Activated CD4-positive, alpha-beta T cell treated with anti-CD3 and anti-CD28 coated beads for 36 hours (primary cell): ENCODE measurements at regions of chr3 and their contacts with region 1.

Region 1: DNA sequence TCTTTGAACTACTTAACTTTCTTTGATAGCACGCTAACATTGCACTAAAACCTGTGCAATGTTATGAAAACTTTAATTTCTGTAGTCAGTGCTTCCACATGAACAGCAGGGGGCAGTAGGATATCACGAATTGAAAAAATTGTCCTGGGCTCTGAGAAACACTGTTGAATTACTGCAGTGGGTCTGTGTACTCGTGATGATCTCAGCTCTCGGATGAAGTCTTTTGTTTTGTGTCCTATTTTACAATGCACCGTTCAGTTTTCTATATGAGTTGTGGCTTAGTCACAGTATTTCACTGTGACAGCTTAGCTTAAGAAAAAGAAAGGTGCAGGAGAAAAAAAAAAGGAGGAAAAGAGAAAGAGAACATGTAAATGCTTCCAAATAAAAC is 141.3 kb upstream of the CCDC54 start:
- DNase-seq: peak; percentile 56
- ATAC-seq: peak; percentile 82
- H3K4me3 Mint-ChIP-seq: peak overlapping the region; percentile 28
- H3K27ac Mint-ChIP-seq: no peak overlapping the region
- H3K4me1 Mint-ChIP-seq: peaks cover 10% of the 10 kb centered on the region
- H3K27me3 Mint-ChIP-seq: peaks cover 6% of the 10 kb centered on the region

Region 2: GRCh38 chr3:107247110-107247509 is 11.2 kb after region 1 on chr3:
- CTCF ChIA-PET with region 1: interaction called, 14 read pairs
- POLR2A ChIA-PET with region 1: no interaction called
- intact Hi-C with region 1: no loop called
- DNase-seq: no peak
- ATAC-seq: no peak
- H3K4me3 Mint-ChIP-seq: no peak overlapping the region
- H3K27ac Mint-ChIP-seq: no peak overlapping the region
- H3K4me1 Mint-ChIP-seq: peaks cover 3% of the 10 kb centered on the region
- H3K27me3 Mint-ChIP-seq: no peaks in the 10 kb centered on the region

Region 3: GRCh38 chr3:107421170-107421792 is 185.4 kb after region 1 on chr3:
- CTCF ChIA-PET with region 1: interaction called, 44 read pairs
- POLR2A ChIA-PET with region 1: no interaction called
- intact Hi-C with region 1: loop called (anchors 1 kb)
- DNase-seq: no peak
- ATAC-seq: peak; percentile 79
- H3K4me3 Mint-ChIP-seq: no peak overlapping the region
- H3K27ac Mint-ChIP-seq: no peak overlapping the region
- H3K4me1 Mint-ChIP-seq: peaks cover 3% of the 10 kb centered on the region
- H3K27me3 Mint-ChIP-seq: peaks cover 7% of the 10 kb centered on the region

Region 4: DNA sequence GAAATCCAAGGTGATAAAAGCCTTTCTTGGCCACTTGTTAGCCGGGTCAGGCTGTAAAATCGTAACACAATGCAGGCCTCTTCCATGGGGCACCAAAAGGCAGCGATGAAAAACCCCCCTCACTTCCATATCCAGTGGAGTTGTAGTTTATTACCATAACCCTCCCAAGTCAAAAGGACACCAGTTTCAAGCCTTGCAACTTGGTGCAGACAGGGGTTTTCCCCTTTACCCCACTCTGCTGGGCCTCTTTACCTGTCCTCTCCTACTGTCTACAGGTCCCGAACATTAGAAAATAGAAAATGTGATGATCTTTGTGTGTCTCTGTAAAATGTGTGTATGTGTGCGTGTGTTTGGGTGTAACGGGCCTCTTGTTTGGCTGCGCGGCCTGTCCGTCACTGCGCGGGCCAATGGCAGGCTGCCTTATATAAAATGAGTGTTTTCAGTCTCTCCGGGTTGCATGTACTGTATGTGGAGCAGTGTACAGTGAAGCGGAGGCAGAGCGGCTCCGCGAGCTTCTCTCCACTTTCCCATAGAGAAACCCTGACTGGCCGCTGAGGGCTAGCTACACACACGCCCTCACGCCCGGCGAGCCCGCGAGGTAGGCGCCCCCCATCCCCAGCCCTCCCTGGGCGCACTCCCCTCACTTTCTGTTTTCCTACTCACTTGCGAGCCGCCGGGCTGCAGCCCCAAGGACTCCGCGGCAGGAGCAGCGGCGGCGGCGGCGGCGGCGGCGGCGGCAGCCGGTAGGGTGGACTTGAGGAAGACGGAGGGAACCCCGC is 286.8 kb after region 1 on chr3 and contains the start of gene BBX:
- CTCF ChIA-PET with region 1: no interaction called
- POLR2A ChIA-PET with region 1: no interaction called
- intact Hi-C with region 1: loop called (anchors 1 to 5 kb)
- DNase-seq: peak; percentile 91
- ATAC-seq: peak; percentile 93
- H3K4me3 Mint-ChIP-seq: peak within 1 kb of the TSS; percentile 97
- H3K27ac Mint-ChIP-seq: peak within 1 kb of the TSS; percentile 95
- H3K4me1 Mint-ChIP-seq: peaks cover 25% of the 10 kb centered on the region
- H3K27me3 Mint-ChIP-seq: no peaks in the 10 kb centered on the region
- total RNA-seq, gene BBX: 38.9 to 63.4 TPM

Region 5: DNA sequence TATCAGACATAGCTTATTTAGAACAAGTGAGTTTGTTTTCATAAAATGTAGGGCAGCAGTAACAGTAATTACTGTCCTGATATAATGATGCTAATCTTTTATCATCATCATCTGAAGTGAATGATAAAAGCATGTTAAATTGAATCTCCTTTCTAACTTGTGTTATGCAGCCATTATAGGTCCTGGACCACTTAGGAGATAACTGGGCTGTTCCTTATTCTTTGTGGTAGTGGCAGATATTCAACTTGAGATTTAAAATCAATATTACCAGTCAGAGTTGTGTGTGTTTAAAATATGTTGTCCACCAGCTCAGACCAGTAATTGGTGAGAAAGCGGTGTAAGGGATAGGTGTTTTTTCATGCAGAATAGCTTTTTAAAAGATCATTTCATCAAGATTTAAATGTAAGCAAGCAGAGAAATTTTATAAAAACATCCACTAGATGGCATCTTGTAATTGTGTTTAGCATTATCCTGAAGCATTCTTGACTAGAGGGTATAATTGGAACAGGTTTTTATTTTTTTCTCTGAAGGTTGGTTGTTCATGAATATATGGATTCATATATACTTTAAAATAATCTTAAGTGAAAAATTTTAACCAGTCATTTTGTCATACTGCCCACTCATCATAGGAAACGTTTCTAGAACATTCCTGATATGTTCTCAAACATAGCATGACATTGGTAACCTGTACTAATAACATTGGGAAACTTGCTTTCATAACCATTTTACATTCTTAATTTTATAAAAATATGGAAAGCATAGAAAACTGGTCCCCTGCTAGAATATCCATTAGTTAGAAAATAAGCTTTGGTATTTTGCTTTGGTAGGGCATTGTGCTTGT is 440.8 kb after region 1 on chr3:
- CTCF ChIA-PET with region 1: interaction called, 3 read pairs
- POLR2A ChIA-PET with region 1: no interaction called
- intact Hi-C with region 1: loop called in 1 of 2 experiments (anchors 5 kb)
- DNase-seq: no peak
- ATAC-seq: peak; percentile 49
- H3K4me3 Mint-ChIP-seq: no peak overlapping the region
- H3K27ac Mint-ChIP-seq: no peak overlapping the region
- H3K4me1 Mint-ChIP-seq: peaks cover 34% of the 10 kb centered on the region
- H3K27me3 Mint-ChIP-seq: no peaks in the 10 kb centered on the region

Region 6: GRCh38 chr3:107846279-107846852 is 610.4 kb after region 1 on chr3:
- CTCF ChIA-PET with region 1: interaction called, 4 read pairs
- POLR2A ChIA-PET with region 1: no interaction called
- intact Hi-C with region 1: loop called in 1 of 2 experiments (anchors 2 kb)
- DNase-seq: peak; percentile 70
- ATAC-seq: no peak
- H3K4me3 Mint-ChIP-seq: no peak overlapping the region
- H3K27ac Mint-ChIP-seq: no peak overlapping the region
- H3K4me1 Mint-ChIP-seq: peaks cover 2% of the 10 kb centered on the region
- H3K27me3 Mint-ChIP-seq: peaks cover 2% of the 10 kb centered on the region

Region 7: GRCh38 chr3:108406661-108407206 is 1170.8 kb after region 1 on chr3:
- CTCF ChIA-PET with region 1: no interaction called
- POLR2A ChIA-PET with region 1: no interaction called
- intact Hi-C with region 1: loop called in 1 of 2 experiments (anchors 1 kb)
- DNase-seq: peak; percentile 35
- ATAC-seq: peak; percentile 96
- H3K4me3 Mint-ChIP-seq: no peak overlapping the region
- H3K27ac Mint-ChIP-seq: no peak overlapping the region
- H3K4me1 Mint-ChIP-seq: peaks cover 10% of the 10 kb centered on the region
- H3K27me3 Mint-ChIP-seq: no peaks in the 10 kb centered on the region